ENCODE measurements at regions of chr9 and their contacts with region 1.

Region 1: DNA sequence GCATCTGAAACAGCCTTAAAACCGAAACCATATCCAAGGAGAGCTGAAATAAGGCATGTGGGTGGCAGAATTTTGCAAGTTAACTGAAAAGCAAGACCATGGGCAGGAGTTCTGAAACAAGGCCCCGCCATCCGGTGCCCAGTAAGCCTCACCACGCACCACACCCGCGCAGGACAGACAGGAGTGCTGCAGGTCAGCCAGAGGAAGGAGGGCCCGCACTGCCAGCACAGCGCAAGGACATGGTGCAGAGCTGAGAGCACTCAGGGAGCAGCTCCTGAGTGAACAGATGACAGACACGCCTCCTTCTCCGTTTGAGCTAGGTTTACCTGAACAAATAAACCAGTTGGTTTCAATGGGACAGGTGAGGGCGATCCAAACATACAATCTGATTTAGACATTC is 16.5 kb upstream of the ISCA1 start:
- DNase-seq: no peak
- H3K4me3 Mint-ChIP-seq: no peak overlapping the region
- H3K27ac Mint-ChIP-seq: no peak overlapping the region
- H3K4me1 Mint-ChIP-seq: peaks cover 21% of the 10 kb centered on the region
- H3K27me3 Mint-ChIP-seq: no peaks in the 10 kb centered on the region
- CTCF ChIP-seq: no peak

Region 2: DNA sequence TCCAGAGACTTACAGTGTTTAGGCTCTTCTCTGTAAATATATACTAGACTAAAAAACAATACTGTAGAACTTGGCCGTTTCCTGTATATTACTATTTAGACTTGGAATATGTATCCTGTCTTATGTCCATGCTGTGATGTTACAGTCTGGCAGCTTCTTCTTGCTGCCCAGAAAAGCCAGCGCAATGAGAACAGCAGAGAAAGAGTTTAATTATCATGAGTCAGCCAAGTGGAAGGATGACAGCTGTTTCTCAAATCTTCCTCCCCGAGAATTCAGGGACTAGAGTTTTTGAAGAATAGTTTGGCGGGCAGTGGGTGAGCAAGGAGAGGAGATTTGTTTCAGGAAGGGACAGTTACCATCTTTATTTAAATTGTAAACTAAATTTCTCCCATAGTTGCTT is 320.4 kb before region 1 on chr9:
- CTCF ChIA-PET with region 1: no interaction called
- POLR2A ChIA-PET with region 1: no interaction called
- intact Hi-C with region 1: no loop called
- DNase-seq: no peak
- H3K4me3 Mint-ChIP-seq: no peak overlapping the region
- H3K27ac Mint-ChIP-seq: no peak overlapping the region
- H3K4me1 Mint-ChIP-seq: no peaks in the 10 kb centered on the region
- H3K27me3 Mint-ChIP-seq: no peaks in the 10 kb centered on the region
- CTCF ChIP-seq: no peak

Region 3: GRCh38 chr9:86176468-86176867 is 122.4 kb before region 1 on chr9:
- CTCF ChIA-PET with region 1: no interaction called
- POLR2A ChIA-PET with region 1: no interaction called
- intact Hi-C with region 1: no loop called
- DNase-seq: peak; percentile 83
- H3K4me3 Mint-ChIP-seq: no peak overlapping the region
- H3K27ac Mint-ChIP-seq: no peak overlapping the region
- H3K4me1 Mint-ChIP-seq: peaks cover 16% of the 10 kb centered on the region
- H3K27me3 Mint-ChIP-seq: no peaks in the 10 kb centered on the region
- CTCF ChIP-seq: no peak

Region 4: DNA sequence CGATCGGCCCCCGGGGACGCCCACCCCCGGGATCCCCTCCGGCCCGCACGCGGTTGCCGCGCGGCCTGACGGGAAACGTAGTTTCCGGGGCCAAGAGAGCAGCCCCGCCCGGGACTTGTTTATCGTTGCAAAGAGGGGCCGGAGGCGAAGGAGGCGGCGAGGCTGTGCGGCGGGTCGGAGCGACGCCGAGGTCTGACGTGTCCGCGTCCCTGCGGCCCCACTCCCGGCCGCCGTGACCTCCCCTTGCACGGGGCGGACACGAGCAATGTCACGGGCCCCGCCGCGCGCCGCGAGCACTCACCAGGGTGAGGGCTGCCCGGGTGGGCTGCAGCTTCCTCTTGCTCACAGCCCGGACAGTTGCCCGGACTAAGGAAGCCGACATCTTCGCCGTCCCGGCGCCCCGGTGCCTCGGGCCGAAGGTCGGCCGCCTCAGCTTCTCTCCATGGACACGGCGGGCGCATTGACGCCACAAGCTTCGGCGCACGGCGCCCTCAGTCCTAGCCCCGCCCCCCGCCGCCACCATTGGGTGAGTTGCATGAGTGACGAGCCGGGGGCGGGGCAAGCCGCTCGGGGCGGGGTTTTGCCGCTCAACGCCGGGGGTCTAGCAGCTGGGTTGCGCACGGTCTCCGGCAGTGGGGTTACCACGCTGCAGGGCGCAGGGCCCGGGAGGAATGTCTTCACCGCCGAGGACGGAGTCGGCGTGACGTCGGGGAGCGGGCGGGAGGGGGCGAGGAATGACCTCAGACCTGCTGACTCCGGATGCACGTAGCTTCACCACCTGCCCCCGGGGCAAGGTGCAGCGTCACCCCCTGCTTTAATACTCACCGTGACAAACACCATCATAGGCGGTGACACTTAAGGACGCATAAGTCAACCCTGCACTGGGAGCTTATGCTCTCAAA is 16.5 kb before region 1 on chr9 and contains the start of gene ISCA1:
- CTCF ChIA-PET with region 1: interaction called, 5 read pairs
- POLR2A ChIA-PET with region 1: interaction called, 15 read pairs
- intact Hi-C with region 1: no loop called
- DNase-seq: peak; percentile 95
- H3K4me3 Mint-ChIP-seq: peak within 1 kb of the TSS; percentile 80
- H3K27ac Mint-ChIP-seq: peak within 1 kb of the TSS; percentile 93
- H3K4me1 Mint-ChIP-seq: peaks cover 24% of the 10 kb centered on the region
- H3K27me3 Mint-ChIP-seq: no peaks in the 10 kb centered on the region
- CTCF ChIP-seq: no peak
- total RNA-seq, gene ISCA1: 24.7 and 31.1 TPM in 2 replicates

Region 5: DNA sequence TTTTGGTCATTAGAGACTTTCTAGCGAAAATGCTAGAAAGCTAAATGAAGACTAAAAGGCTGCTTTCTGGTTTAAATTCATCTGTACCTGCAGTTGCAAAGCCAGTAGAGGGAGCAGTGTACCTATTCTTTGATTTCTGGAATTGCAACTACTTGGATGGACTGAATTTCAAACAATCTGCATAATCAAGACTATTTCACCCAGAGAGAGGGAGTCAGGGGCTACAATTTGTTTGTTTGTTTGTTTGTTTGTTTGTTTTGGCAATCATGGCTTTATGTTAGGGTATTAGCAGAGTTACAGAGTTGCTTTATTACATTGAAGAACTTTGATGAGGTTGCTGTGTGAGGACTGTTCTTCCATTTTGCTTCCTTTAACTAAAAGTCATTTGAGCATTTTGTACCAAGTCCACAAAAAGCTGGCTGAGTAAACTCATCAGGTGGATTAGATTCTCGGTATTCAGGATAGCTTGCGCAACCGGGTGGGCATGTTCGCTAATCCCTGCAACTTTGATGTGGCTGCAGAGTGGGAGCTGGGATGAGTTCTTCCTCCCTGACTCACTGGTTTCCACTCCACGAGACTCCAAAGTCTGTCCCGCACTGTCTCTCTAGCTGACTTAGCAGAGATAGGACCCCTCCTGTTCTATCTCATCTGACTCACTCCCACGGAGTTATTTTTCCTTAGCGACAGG is 135.3 kb after region 1 on chr9:
- CTCF ChIA-PET with region 1: no interaction called
- POLR2A ChIA-PET with region 1: no interaction called
- intact Hi-C with region 1: no loop called
- DNase-seq: peak; percentile 56
- H3K4me3 Mint-ChIP-seq: no peak overlapping the region
- H3K27ac Mint-ChIP-seq: no peak overlapping the region
- H3K4me1 Mint-ChIP-seq: peaks cover 13% of the 10 kb centered on the region
- H3K27me3 Mint-ChIP-seq: no peaks in the 10 kb centered on the region
- CTCF ChIP-seq: peak; percentile 73

Region 6: GRCh38 chr9:86604741-86605140 is 305.9 kb after region 1 on chr9:
- CTCF ChIA-PET with region 1: no interaction called
- POLR2A ChIA-PET with region 1: no interaction called
- intact Hi-C with region 1: no loop called
- DNase-seq: no peak
- H3K4me3 Mint-ChIP-seq: no peak overlapping the region
- H3K27ac Mint-ChIP-seq: peak overlapping the region; percentile 12
- H3K4me1 Mint-ChIP-seq: peaks cover 15% of the 10 kb centered on the region
- H3K27me3 Mint-ChIP-seq: no peaks in the 10 kb centered on the region
- CTCF ChIP-seq: no peak